CD4-positive, alpha-beta T cell (primary cell): ENCODE measurements at regions of chr11 and their contacts with region 1.

Region 1: GRCh38 chr11:134207538-134208239 is 16.1 kb downstream of the NCAPD3 start:
- DNase-seq: peak; percentile 42 to 75 (median 56)
- ATAC-seq: peak; percentile 61
- H3K4me3 ChIP-seq: no peak overlapping the region
- H3K4me3 Mint-ChIP-seq: no peak overlapping the region
- H3K27ac ChIP-seq: no peak overlapping the region
- H3K27ac Mint-ChIP-seq: no peak overlapping the region
- H3K4me1 ChIP-seq: no peaks in the 10 kb centered on the region
- H3K4me1 Mint-ChIP-seq: no peaks in the 10 kb centered on the region
- H3K27me3 ChIP-seq: no peaks in the 10 kb centered on the region
- H3K27me3 Mint-ChIP-seq: no peaks in the 10 kb centered on the region
- CTCF ChIP-seq: peak; percentile 93

Region 2: GRCh38 chr11:133531971-133532651 is 675.6 kb before region 1 on chr11 and contains the start of gene OPCML:
- CTCF ChIA-PET with region 1: no interaction called
- POLR2A ChIA-PET with region 1: no interaction called
- intact Hi-C with region 1: no loop called
- DNase-seq: no peak
- ATAC-seq: no peak
- H3K4me3 ChIP-seq: no peak within 1 kb of the TSS
- H3K4me3 Mint-ChIP-seq: no peak within 1 kb of the TSS
- H3K27ac ChIP-seq: no peak within 1 kb of the TSS
- H3K27ac Mint-ChIP-seq: no peak within 1 kb of the TSS
- H3K4me1 ChIP-seq: no peaks in the 10 kb centered on the region
- H3K4me1 Mint-ChIP-seq: no peaks in the 10 kb centered on the region
- H3K27me3 ChIP-seq: peaks cover 11 to 41% of the 10 kb centered on the region in 2 experiments
- H3K27me3 Mint-ChIP-seq: peaks cover 46% of the 10 kb centered on the region
- CTCF ChIP-seq: no peak
- total RNA-seq, gene OPCML: not detected

Region 3: DNA sequence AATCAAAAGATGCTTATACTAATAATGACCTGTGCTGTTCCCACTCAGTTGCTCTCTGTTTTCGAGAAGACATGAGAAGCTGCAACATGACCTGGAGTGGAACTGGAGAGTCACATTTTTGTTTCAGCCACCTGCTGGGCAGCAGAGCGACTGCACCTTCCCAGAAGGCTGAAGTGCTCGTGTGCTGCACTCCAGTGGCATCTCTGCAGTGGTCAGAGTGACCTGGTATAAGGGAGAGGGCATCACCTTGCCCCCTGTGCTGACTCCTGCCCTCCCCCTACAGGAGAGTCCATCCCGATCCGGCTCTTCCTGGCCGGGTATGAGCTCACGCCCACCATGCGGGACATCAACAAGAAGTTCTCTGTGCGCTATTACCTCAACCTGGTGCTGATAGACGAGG is 37.0 kb after region 1 on chr11:
- CTCF ChIA-PET with region 1: interaction called, 8 read pairs
- POLR2A ChIA-PET with region 1: no interaction called
- intact Hi-C with region 1: loop called (anchors 2 kb)
- DNase-seq: peak in 3 of 14 experiments; percentile 22 to 56 (median 53)
- ATAC-seq: peak; percentile 77
- H3K4me3 ChIP-seq: no peak overlapping the region
- H3K4me3 Mint-ChIP-seq: no peak overlapping the region
- H3K27ac ChIP-seq: no peak overlapping the region
- H3K27ac Mint-ChIP-seq: no peak overlapping the region
- H3K4me1 ChIP-seq: no peaks in the 10 kb centered on the region
- H3K4me1 Mint-ChIP-seq: no peaks in the 10 kb centered on the region
- H3K27me3 ChIP-seq: no peaks in the 10 kb centered on the region
- H3K27me3 Mint-ChIP-seq: no peaks in the 10 kb centered on the region
- CTCF ChIP-seq: peak; percentile 56